ENCODE measurements at regions of chr11 and their contacts with region 1.

Region 1: GRCh38 chr11:10797531-10797930 is 11.2 kb downstream of the EIF4G2 start:
- DNase-seq: no peak
- H3K4me3 ChIP-seq: no peak overlapping the region
- H3K4me3 Mint-ChIP-seq: peak overlapping the region in 1 of 8 donors; percentile 2
- H3K27ac ChIP-seq: no peak overlapping the region
- H3K27ac Mint-ChIP-seq: peak overlapping the region in 1 of 7 donors; percentile 71
- H3K4me1 ChIP-seq: peaks cover 75% of the 10 kb centered on the region
- H3K4me1 Mint-ChIP-seq: peaks cover 58 to 86% (median 72%) of the 10 kb centered on the region in 4 donors
- H3K27me3 ChIP-seq: no peaks in the 10 kb centered on the region
- H3K27me3 Mint-ChIP-seq: no peaks in the 10 kb centered on the region

Region 2: DNA sequence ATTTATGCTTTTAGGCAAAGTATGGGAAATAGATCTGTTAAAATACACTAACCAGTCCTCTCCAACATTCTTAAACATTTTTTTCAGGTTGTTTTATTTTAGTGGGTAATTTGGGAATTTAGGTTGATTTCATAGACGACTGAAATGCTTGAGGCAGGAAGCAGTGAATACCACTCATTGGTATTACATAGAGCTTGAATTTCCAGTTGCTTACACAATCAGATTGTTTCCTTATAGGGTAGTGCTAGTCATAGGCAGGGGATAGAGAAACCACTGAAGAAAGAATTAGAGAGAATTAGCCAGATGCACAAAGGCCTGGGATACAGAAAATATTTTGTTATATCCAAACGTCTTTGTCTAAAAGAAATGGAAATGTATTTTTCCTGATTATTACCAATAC is 205.2 kb before region 1 on chr11:
- CTCF ChIA-PET with region 1: no interaction called
- POLR2A ChIA-PET with region 1: no interaction called
- intact Hi-C with region 1: no loop called
- DNase-seq: no peak
- H3K4me3 ChIP-seq: no peak overlapping the region
- H3K4me3 Mint-ChIP-seq: no peak overlapping the region
- H3K27ac ChIP-seq: no peak overlapping the region
- H3K27ac Mint-ChIP-seq: no peak overlapping the region
- H3K4me1 ChIP-seq: no peaks in the 10 kb centered on the region
- H3K4me1 Mint-ChIP-seq: no peaks in the 10 kb centered on the region
- H3K27me3 ChIP-seq: no peaks in the 10 kb centered on the region
- H3K27me3 Mint-ChIP-seq: peaks cover 7 to 14% of the 10 kb centered on the region in 2 donors

Region 3: GRCh38 chr11:10612216-10612862 is 185.2 kb before region 1 on chr11:
- CTCF ChIA-PET with region 1: no interaction called
- POLR2A ChIA-PET with region 1: no interaction called
- intact Hi-C with region 1: no loop called
- DNase-seq: no peak
- H3K4me3 ChIP-seq: no peak overlapping the region
- H3K4me3 Mint-ChIP-seq: no peak overlapping the region
- H3K27ac ChIP-seq: no peak overlapping the region
- H3K27ac Mint-ChIP-seq: no peak overlapping the region
- H3K4me1 ChIP-seq: no peaks in the 10 kb centered on the region
- H3K4me1 Mint-ChIP-seq: no peaks in the 10 kb centered on the region
- H3K27me3 ChIP-seq: no peaks in the 10 kb centered on the region
- H3K27me3 Mint-ChIP-seq: peaks cover 17 to 18% of the 10 kb centered on the region in 2 donors

Region 4: GRCh38 chr11:10784232-10785145 is 13.0 kb before region 1 on chr11:
- CTCF ChIA-PET with region 1: interaction called, 74 read pairs
- POLR2A ChIA-PET with region 1: interaction called, 263 read pairs
- intact Hi-C with region 1: no loop called
- DNase-seq: no peak
- H3K4me3 ChIP-seq: no peak overlapping the region
- H3K4me3 Mint-ChIP-seq: no peak overlapping the region
- H3K27ac ChIP-seq: no peak overlapping the region
- H3K27ac Mint-ChIP-seq: no peak overlapping the region
- H3K4me1 ChIP-seq: no peaks in the 10 kb centered on the region
- H3K4me1 Mint-ChIP-seq: no peaks in the 10 kb centered on the region
- H3K27me3 ChIP-seq: no peaks in the 10 kb centered on the region
- H3K27me3 Mint-ChIP-seq: no peaks in the 10 kb centered on the region

Region 5: DNA sequence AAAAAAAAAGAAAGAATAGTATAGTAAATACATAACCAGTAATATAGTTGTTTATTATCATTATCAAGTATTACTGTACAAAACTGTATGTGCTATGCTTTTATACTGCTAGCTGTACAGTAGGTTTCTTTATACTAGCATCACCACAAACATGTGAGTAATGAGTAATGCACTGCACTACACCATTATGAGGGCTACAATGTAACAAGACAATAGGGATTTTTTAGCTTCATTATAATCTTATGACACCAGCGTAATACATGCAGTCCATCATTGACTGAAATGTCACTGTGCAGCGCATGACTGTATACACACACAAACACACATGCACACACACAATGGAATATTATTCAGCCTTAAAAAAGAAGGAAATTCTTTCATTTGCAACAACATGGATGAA is 171.9 kb after region 1 on chr11:
- CTCF ChIA-PET with region 1: no interaction called
- POLR2A ChIA-PET with region 1: no interaction called
- intact Hi-C with region 1: no loop called
- DNase-seq: no peak
- H3K4me3 ChIP-seq: no peak overlapping the region
- H3K4me3 Mint-ChIP-seq: no peak overlapping the region
- H3K27ac ChIP-seq: no peak overlapping the region
- H3K27ac Mint-ChIP-seq: no peak overlapping the region
- H3K4me1 ChIP-seq: no peaks in the 10 kb centered on the region
- H3K4me1 Mint-ChIP-seq: no peaks in the 10 kb centered on the region
- H3K27me3 ChIP-seq: no peaks in the 10 kb centered on the region
- H3K27me3 Mint-ChIP-seq: peaks cover 0 to 4% of the 10 kb centered on the region in 2 donors

Region 6: DNA sequence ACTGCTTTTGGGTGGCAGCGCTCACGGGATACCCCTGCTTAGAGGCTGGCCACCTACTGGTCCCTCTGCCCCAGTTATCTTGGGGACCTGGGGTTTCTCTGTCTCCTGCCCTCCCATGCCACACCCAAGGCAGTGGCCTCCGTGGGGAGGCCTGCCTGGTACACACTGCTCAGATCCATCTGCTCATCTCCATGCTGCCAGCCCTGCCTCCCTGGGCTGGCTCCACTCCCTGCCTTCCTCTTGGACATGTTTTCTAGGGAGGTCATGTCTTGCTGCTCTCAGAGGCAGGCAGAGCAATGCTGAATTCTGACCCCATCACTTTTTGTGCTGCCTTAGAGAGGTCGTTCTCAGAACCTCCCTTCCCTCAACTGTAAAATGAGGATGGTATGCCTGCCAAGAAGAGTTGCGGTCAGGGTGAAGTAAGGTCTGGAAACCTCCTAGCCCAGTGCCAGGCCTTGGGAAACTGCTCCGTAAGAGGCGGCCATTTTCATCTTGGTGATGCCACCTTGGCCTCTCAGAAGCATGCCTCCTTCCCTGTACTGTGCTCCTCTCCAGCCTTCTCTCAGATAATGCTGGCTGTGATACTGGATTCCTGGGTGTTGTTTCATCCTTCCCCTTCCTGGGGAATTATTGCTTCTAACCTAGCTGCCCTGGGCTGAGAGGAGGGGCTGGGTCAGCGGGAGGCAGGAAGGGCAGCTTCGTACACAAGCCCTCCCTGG is 246.8 kb after region 1 on chr11:
- CTCF ChIA-PET with region 1: no interaction called
- POLR2A ChIA-PET with region 1: no interaction called
- intact Hi-C with region 1: no loop called
- DNase-seq: no peak
- H3K4me3 ChIP-seq: no peak overlapping the region
- H3K4me3 Mint-ChIP-seq: no peak overlapping the region
- H3K27ac ChIP-seq: no peak overlapping the region
- H3K27ac Mint-ChIP-seq: no peak overlapping the region
- H3K4me1 ChIP-seq: no peaks in the 10 kb centered on the region
- H3K4me1 Mint-ChIP-seq: peaks cover 0 to 2% (median 0%) of the 10 kb centered on the region in 4 donors
- H3K27me3 ChIP-seq: no peaks in the 10 kb centered on the region
- H3K27me3 Mint-ChIP-seq: no peaks in the 10 kb centered on the region

Measured in CD4-positive, alpha-beta memory T cell (primary cell).